Activated naive CD4-positive, alpha-beta T cell treated with anti-CD3 and anti-CD28 coated beads for 36 hours (primary cell): ENCODE measurements at regions of chr2 and their contacts with region 1.

Region 1: GRCh38 chr2:20350753-20351554 is at the start of gene PUM2:
- DNase-seq: peak; percentile 94
- H3K4me3 Mint-ChIP-seq: no peak within 1 kb of the TSS
- H3K27ac Mint-ChIP-seq: peak within 1 kb of the TSS; percentile 90
- H3K4me1 Mint-ChIP-seq: peaks cover 28% of the 10 kb centered on the region
- H3K27me3 Mint-ChIP-seq: no peaks in the 10 kb centered on the region
- total RNA-seq, gene PUM2: 88.4 to 96.8 TPM

Region 2: DNA sequence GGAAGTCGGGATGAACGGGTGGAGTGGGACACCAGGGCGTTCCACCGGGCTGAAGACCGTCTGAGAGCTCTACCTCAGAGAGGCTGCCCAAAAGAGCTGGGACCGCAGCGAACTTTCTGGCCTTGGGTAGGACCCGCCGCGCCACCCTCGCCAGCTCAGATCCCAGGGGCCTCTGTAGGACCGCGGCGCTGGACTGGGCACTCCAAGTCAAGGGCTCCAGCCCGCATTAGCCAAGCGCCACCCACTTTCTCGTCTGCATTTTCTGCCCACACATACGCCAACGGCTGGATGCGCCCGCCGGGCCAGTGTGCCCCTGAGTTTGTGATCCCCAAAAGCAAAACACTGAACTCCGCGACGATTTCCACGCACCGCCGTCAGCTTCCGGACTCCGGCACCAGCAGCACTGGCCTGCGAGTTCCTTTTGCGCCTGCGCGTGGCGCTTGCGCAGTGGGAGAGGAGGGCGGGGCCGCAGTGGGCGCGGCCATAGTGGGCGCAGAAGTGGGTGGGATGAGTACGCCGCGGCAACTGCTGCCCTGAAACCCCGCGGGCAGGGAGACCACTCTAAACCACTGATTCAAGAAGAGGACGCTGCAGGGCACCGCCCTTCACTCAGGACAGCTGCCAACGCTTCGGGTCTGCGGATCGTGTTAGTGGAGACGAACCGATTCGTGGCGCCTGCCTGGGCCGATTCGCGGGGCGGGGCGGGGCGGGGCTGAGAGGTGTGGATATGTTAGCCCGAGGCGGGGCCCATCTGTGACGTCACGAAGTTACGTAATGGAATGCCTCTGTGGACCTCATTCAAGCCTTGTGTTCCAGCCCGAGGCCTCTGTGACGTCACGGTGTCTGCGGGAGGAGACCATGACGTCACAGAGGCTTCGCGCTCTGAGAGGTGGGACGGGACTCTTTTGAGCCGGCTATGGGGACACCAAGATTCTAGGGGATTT is 1003.1 kb before region 1 on chr2:
- CTCF ChIA-PET with region 1: no interaction called
- intact Hi-C with region 1: loop called (anchors 1 kb)
- DNase-seq: peak; percentile 94
- H3K4me3 Mint-ChIP-seq: peak overlapping the region; percentile 95
- H3K27ac Mint-ChIP-seq: peak overlapping the region; percentile 96
- H3K4me1 Mint-ChIP-seq: peaks cover 26% of the 10 kb centered on the region
- H3K27me3 Mint-ChIP-seq: peaks cover 37% of the 10 kb centered on the region

Region 3: DNA sequence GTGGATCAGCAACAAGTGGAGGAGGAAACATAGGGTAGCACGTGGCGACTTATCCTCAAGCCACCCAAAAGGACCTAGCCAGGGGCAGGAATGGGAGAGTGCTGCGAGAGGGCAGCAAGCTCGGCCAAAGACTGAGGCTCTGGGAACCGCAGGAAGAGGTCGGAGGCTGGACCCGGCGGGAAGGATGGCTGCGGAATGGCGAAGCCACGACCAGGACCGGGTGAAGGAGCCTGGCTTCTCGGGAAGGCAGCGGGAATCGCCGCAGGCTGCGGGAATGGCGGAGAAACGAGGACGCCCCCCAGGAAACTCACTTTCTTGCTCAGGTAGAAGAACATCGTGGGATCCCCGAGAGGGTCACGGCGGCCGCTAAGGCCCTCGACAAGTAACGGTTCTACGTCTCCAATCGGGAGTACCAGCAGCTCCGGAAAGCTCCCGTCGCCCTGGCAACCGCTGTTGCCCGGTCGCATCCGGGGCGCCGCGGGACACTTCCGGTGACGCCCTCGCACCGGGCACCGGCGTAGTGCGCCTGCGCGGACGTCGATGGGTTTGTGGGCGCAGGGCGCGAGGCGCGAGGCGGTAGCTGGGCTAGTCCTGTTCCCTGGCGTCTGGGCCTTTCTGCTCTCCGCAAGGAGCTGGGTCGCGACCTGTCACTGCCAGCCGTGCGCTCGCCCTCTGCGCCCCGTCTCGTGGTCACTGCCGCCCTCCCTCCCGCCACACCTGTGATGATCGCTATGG is 361.1 kb before region 1 on chr2 and contains the start of gene WDR35:
- CTCF ChIA-PET with region 1: no interaction called
- intact Hi-C with region 1: loop called (anchors 2 kb)
- DNase-seq: peak; percentile 91
- H3K4me3 Mint-ChIP-seq: peak within 1 kb of the TSS; percentile 87
- H3K27ac Mint-ChIP-seq: peak within 1 kb of the TSS; percentile 54
- H3K4me1 Mint-ChIP-seq: peaks cover 28% of the 10 kb centered on the region
- H3K27me3 Mint-ChIP-seq: peaks cover 13% of the 10 kb centered on the region
- total RNA-seq, gene WDR35: 4.3 to 4.4 TPM

Region 4: DNA sequence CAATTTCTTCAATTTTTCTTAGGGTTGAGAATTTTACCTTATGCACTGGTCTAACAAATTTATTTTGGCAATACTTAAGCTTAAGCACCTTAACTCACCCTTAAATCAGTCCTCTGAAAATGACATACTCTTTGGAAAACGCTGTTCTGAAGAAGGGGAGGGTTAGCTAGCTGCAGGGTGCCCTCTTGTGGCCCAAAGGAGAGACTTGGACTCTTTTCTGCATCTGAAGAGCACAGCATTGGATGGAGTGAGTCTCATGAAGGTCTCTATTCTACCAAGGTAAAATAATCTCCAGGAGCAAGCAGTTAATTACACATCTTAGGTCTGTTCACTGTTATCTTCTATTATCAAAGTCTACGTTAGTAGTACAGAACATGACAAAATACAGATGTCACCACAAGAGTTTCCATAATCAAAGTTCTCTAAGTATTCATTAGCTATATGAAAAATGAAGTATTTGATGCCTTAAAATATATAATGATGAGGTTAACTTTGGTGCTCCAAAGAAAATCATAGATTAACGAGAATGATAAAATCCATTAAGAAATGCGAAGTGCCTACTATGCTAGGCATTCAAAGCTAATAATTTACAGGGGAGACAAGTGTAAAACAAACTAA is 24.7 kb before region 1 on chr2:
- CTCF ChIA-PET with region 1: interaction called, 16 read pairs
- intact Hi-C with region 1: no loop called
- DNase-seq: peak; percentile 70
- H3K4me3 Mint-ChIP-seq: no peak overlapping the region
- H3K27ac Mint-ChIP-seq: no peak overlapping the region
- H3K4me1 Mint-ChIP-seq: peaks cover 70% of the 10 kb centered on the region
- H3K27me3 Mint-ChIP-seq: no peaks in the 10 kb centered on the region

Region 5: DNA sequence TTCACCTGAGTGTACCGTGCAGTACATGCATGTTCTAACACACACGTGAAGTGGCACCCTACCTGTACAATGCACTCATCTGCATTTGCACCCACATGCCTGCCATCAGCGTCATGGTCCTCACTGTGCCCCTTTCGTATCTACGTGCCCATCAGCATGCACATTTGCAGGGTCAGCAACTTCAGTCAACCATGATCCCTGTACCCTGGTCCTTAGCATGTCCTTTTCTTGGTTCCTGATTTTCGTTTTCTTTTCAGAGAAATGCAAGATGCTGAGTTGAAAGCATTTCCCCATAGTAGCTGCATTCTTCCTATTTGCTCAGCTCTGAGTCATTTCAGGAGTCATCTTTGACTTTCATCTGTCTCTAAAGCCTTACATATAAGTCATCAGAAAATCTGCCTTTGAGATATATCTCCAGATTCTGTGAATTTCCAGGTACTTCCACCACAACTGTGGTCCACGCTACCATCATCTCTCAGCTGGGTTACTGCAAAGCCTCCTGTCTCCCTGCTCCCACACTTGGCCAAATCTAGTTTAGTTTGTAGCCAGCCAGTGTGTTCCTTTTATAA is 14.4 kb after region 1 on chr2:
- CTCF ChIA-PET with region 1: interaction called, 8 read pairs
- intact Hi-C with region 1: loop called (anchors 1 kb)
- DNase-seq: peak; percentile 84
- H3K4me3 Mint-ChIP-seq: no peak overlapping the region
- H3K27ac Mint-ChIP-seq: peak overlapping the region; percentile 54
- H3K4me1 Mint-ChIP-seq: peaks cover 25% of the 10 kb centered on the region
- H3K27me3 Mint-ChIP-seq: peaks cover 11% of the 10 kb centered on the region

Region 6: DNA sequence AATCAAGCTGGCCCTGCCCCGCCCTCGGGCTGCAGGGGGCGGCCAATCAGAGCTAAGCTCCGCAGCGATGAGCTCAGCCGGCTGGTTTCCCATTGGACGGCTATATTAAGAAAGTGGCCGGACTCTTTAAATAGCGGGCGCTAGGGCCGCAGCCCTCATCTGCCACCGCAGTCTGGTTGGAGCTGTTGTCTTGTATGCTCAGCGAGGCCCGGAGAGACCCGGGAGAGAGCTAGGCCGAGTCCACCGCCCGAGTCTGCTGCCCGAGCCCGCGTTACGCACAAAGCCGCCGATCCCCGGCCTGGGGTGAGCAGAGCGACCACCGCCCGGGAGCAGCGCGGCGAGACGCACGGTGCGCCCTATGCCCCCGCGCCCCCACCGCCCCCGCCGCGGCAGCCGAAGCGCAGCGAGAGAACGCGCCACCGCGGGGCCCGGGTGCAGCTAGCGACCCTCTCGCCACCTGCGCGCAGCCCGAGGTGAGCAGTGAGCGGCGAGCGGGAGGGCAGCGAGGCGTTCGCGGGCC is 96.0 kb after region 1 on chr2 and contains the start of gene RHOB:
- CTCF ChIA-PET with region 1: interaction called, 3 read pairs
- intact Hi-C with region 1: loop called (anchors 1 kb)
- DNase-seq: peak; percentile 91
- H3K4me3 Mint-ChIP-seq: peak within 1 kb of the TSS; percentile 76
- H3K27ac Mint-ChIP-seq: no peak within 1 kb of the TSS
- H3K4me1 Mint-ChIP-seq: peaks cover 11% of the 10 kb centered on the region
- H3K27me3 Mint-ChIP-seq: peaks cover 3% of the 10 kb centered on the region
- total RNA-seq, gene RHOB: 1.8 to 2.0 TPM